Mammary epithelial cell (primary cell): ENCODE measurements at regions of chr6 and their contacts with region 1.

Region 1: GRCh38 chr6:118551063-118552053 is 3.3 kb downstream of the PLN start:
- DNase-seq: peak; percentile 37
- H3K4me3 ChIP-seq: peak overlapping the region in 1 of 3 experiments; percentile 11
- H3K27ac ChIP-seq: no peak overlapping the region
- H3K4me1 ChIP-seq: peaks cover 5% of the 10 kb centered on the region
- H3K27me3 ChIP-seq: no peaks in the 10 kb centered on the region
- CTCF ChIP-seq: peak; percentile 58 to 71

Region 2: DNA sequence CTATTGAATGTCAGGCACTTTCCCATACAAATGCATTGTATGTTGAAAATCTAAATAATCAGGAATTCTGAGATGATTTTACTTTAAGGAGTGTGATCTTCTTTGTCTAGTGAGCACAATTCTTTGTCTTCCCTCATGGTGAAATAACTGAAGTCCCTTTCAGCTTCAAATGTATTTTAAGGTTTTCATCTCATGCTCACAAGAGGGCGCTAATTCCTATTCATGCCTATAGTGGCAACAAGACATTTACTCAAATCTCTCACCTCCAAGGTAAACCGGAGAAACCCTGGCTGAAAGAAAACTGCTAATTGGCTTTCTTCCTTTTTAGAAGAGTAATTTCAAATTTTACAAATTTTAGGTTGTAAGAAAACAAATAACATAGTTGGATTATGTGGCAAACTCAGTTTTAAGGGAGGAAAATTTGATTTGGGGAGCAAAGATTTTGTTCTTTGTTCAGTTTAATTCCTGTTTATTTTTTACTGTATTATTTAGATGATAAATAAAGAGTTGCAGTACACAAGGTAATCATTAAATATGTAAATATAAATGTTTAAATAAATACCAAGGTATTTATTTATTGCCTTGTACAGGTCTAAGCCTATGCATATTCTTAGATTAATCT is 575.2 kb before region 1 on chr6:
- CTCF ChIA-PET with region 1: no interaction called
- dilution Hi-C with region 1: no loop called
- in situ Hi-C with region 1: no loop called
- intact Hi-C with region 1: loop called (anchors 1 kb)
- DNase-seq: peak; percentile 30
- H3K4me3 ChIP-seq: no peak overlapping the region
- H3K27ac ChIP-seq: no peak overlapping the region
- H3K4me1 ChIP-seq: no peaks in the 10 kb centered on the region
- H3K27me3 ChIP-seq: no peaks in the 10 kb centered on the region
- CTCF ChIP-seq: peak; percentile 63 to 81

Region 3: DNA sequence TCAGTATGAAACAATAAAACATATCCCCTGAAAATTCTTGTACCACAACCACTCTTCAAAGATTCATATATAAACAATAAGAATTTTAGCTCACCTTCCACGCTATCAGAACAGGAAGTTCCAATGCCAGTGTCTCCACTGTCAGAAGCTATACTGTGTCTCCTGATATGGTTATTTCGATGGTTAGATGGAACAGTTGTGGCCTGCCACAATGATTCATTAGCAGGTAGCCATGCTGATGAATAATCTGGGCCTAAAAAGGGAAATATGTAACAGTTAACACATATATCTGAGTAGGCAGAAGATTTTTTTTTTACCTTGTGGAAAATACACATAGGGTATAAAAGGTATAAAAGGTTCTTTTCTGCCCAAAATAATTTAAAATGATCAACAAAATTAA is 81.0 kb after region 1 on chr6:
- CTCF ChIA-PET with region 1: no interaction called
- dilution Hi-C with region 1: no loop called
- in situ Hi-C with region 1: no loop called
- intact Hi-C with region 1: no loop called
- DNase-seq: peak; percentile 79
- H3K4me3 ChIP-seq: no peak overlapping the region
- H3K27ac ChIP-seq: no peak overlapping the region
- H3K4me1 ChIP-seq: peaks cover 7% of the 10 kb centered on the region
- H3K27me3 ChIP-seq: no peaks in the 10 kb centered on the region
- CTCF ChIP-seq: no peak